BJ (cell line): ENCODE measurements at regions of chr12 and their contacts with region 1.

Region 1: GRCh38 chr12:29024117-29024516 is 125.0 kb upstream of the FAR2 start:
- DNase-seq: no peak
- H3K4me3 ChIP-seq: no peak overlapping the region
- H3K27me3 ChIP-seq: no peaks in the 10 kb centered on the region
- CTCF ChIP-seq: 0 out of 2 replicates have a peak, but pooled peaks have one; percentile 26

Region 2: DNA sequence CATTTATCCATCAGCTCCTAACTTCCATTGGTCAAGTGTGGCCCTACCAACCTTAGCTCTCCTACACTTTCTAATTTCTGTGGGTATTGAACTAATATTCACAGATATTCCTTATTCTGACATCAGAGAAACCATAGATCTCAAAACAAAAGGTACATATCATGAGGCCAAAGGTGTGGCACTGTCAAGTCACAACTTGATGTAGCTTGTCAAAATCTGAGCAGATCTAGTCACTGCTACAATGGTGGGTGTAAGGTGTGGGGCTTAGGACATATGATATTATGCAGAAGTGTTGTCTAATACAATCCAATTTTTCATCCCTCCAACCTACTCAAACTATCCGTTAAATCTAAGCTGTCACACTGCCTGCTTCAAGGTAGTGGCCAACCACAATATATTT is 11.0 kb after region 1 on chr12:
- CTCF ChIA-PET with region 1: interaction called, 11 read pairs
- POLR2A ChIA-PET with region 1: no interaction called
- DNase-seq: no peak
- H3K4me3 ChIP-seq: no peak overlapping the region
- H3K27me3 ChIP-seq: no peaks in the 10 kb centered on the region
- CTCF ChIP-seq: no peak

Region 3: GRCh38 chr12:29050503-29050902 is 26.4 kb after region 1 on chr12:
- CTCF ChIA-PET with region 1: no interaction called
- POLR2A ChIA-PET with region 1: no interaction called
- DNase-seq: no peak
- H3K4me3 ChIP-seq: no peak overlapping the region
- H3K27me3 ChIP-seq: peaks cover 2% of the 10 kb centered on the region; the same call in 1 of the 2 replicates
- CTCF ChIP-seq: no peak